Naive thymus-derived CD4-positive, alpha-beta T cell (primary cell): ENCODE measurements at regions of chr5 and their contacts with region 1.

Region 1: GRCh38 chr5:126354012-126354857 is 69.0 kb upstream of the GRAMD2B start:
- DNase-seq: peak in 7 of 9 donors; percentile 26 to 66 (median 53)
- ATAC-seq: peak; percentile 78
- H3K4me3 ChIP-seq: no peak overlapping the region
- H3K4me3 Mint-ChIP-seq: peak overlapping the region; percentile 12 to 80 (median 72)
- H3K27ac ChIP-seq: no peak overlapping the region
- H3K27ac Mint-ChIP-seq: peak overlapping the region in 7 of 9 donors; percentile 19 to 65 (median 36)
- H3K4me1 ChIP-seq: peaks cover 0 to 12% of the 10 kb centered on the region in 2 donors
- H3K4me1 Mint-ChIP-seq: peaks cover 3 to 21% (median 15%) of the 10 kb centered on the region in 7 donors
- H3K27me3 ChIP-seq: no peaks in the 10 kb centered on the region
- H3K27me3 Mint-ChIP-seq: peaks cover 0 to 16% (median 0%) of the 10 kb centered on the region in 5 donors

Region 2: DNA sequence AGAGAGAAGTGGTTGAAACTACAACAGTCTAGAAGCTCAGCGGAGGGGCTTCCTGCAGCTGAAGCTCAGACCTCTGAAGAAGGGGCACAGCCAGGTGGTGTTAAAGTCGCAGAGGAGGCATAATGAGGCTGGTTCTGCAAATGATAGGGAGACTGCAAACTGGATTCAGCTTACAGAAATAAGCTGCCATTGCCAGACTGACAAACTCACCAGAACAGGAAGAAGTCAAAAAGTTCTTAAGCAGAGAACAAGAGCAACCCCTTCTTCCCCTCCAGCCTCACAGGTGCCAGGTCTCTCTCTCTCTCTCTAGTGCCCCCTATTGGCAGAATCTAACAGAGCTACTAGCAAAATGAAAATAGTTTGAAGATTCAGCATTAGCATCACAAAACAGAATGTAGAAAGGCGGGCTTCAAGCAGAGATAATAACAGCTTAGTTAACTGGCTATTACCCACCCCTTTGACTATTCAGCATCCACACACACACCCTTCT is 145.7 kb after region 1 on chr5:
- CTCF ChIA-PET with region 1: interaction called, 25 read pairs
- POLR2A ChIA-PET with region 1: interaction called, 4 read pairs
- intact Hi-C with region 1: loop called (anchors 1 kb)
- DNase-seq: peak in 7 of 9 donors; percentile 36 to 84 (median 78)
- ATAC-seq: peak; percentile 88
- H3K4me3 ChIP-seq: no peak overlapping the region
- H3K4me3 Mint-ChIP-seq: peak overlapping the region in 5 of 10 donors; percentile 10 to 54 (median 24)
- H3K27ac ChIP-seq: no peak overlapping the region
- H3K27ac Mint-ChIP-seq: peak overlapping the region in 8 of 9 donors; percentile 22 to 88 (median 76)
- H3K4me1 ChIP-seq: peaks cover 0 to 25% of the 10 kb centered on the region in 2 donors
- H3K4me1 Mint-ChIP-seq: peaks cover 4 to 58% (median 44%) of the 10 kb centered on the region in 7 donors
- H3K27me3 ChIP-seq: no peaks in the 10 kb centered on the region
- H3K27me3 Mint-ChIP-seq: no peaks in the 10 kb centered on the region